Posterior vena cava (tissue), 2 donors: ENCODE measurements at regions of chr15 and their contacts with region 1.

Region 1: GRCh38 chr15:95215017-95215416 is 983.7 kb downstream of the MCTP2 start:
- DNase-seq: no peak

Region 2: DNA sequence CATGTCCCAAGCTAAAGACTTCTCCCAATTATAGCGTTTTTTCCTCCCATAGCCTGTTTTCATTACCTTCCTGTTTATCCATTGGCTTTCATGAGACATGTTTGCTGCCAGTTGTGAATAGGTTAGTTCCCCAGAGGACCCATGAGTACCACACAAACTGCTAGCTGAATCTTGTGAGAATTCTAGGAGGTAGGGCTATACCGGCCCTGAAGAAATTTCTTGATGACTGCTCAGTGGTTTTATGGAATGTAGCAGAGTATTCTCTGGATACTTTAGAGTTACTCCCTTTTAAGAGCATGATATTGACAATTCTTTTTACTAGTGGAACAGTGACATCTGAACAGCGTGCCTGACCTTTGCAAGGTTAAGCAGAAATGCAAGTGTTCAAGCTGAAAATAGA is 773.3 kb before region 1 on chr15:
- intact Hi-C with region 1: loop called in 1 of 2 experiments (anchors 5 kb)
- DNase-seq: no peak

Region 3: DNA sequence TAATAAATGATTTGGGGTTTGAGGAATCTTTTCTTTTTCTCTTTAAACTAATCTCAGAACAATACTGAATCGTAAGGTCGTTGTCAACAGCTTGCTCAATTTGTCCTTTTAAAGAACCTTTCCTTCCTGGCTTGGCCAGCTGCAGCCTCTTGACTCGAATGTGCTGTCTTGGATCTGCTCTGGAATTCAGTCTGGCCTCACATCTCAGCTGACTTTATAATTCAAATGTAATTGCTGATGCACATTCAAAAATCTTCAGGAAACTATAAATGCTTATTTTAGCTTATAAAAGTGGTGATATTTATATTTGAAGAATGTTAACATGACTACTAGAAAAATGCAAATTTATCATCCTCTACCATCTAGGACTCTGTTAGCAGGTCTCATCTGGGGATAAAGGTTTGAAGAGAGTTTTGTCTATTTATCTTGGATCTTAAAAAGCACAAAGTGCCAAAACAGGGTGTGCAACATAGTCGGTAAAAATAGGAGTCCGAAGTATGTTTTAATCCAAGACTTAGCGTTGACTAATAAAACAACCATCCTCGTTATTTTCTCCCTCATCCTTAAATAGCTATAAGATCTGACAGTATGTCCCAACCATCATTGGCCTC is 51.5 kb after region 1 on chr15:
- intact Hi-C with region 1: no loop called
- DNase-seq: no peak